ENCODE measurements at regions of chr3 and their contacts with region 1.

Region 1: GRCh38 chr3:142965581-142965980 is 2.1 kb upstream of the PAQR9 start:
- DNase-seq: no peak
- H3K4me3 Mint-ChIP-seq: no peak overlapping the region
- H3K27ac Mint-ChIP-seq: no peak overlapping the region
- H3K4me1 Mint-ChIP-seq: peaks cover 11% of the 10 kb centered on the region
- H3K27me3 Mint-ChIP-seq: peaks cover 67% of the 10 kb centered on the region

Region 2: GRCh38 chr3:141360888-141361598 is 1604.5 kb before region 1 on chr3:
- CTCF ChIA-PET with region 1: no interaction called
- POLR2A ChIA-PET with region 1: no interaction called
- DNase-seq: peak; percentile 44
- H3K4me3 Mint-ChIP-seq: no peak overlapping the region
- H3K27ac Mint-ChIP-seq: peak overlapping the region; percentile 3
- H3K4me1 Mint-ChIP-seq: peaks cover 11% of the 10 kb centered on the region
- H3K27me3 Mint-ChIP-seq: peaks cover 2% of the 10 kb centered on the region

Region 3: GRCh38 chr3:142981108-142981507 is 15.5 kb after region 1 on chr3:
- CTCF ChIA-PET with region 1: no interaction called
- POLR2A ChIA-PET with region 1: no interaction called
- DNase-seq: no peak
- H3K4me3 Mint-ChIP-seq: no peak overlapping the region
- H3K27ac Mint-ChIP-seq: no peak overlapping the region
- H3K4me1 Mint-ChIP-seq: no peaks in the 10 kb centered on the region
- H3K27me3 Mint-ChIP-seq: peaks cover 30% of the 10 kb centered on the region

Region 4: DNA sequence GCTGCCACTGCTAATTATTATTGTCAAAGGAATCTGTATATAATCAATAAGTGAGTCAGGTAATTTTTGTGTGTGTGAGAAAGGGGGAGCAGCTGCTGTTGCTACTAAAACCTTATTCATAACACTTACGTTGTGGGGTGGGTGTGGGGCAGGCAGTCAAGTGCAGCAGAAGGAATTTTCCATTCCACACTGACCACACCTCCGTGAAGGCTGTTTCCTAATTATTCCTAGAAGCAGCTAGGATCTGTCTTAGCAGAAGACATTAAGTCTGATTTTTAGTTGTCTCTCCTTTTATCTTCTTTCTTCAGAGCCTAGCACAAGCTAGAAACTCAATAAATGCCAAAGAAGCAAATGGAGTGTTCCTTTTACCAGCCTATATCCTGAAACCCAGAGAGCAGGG is 31.7 kb after region 1 on chr3:
- CTCF ChIA-PET with region 1: no interaction called
- POLR2A ChIA-PET with region 1: interaction called, 12 read pairs
- DNase-seq: no peak
- H3K4me3 Mint-ChIP-seq: no peak overlapping the region
- H3K27ac Mint-ChIP-seq: no peak overlapping the region
- H3K4me1 Mint-ChIP-seq: peaks cover 17% of the 10 kb centered on the region
- H3K27me3 Mint-ChIP-seq: peaks cover 15% of the 10 kb centered on the region

Measured in activated CD4-positive, alpha-beta T cell treated with anti-CD3 and anti-CD28 coated beads, Interleukin-2, amount 10 ng/mL, durations not matched to agents 7 days and 5 days (primary cell).